ENCODE measurements at regions of chr1 and their contacts with region 1.

Region 1: GRCh38 chr1:184504040-184504954 is 117.5 kb downstream of the C1orf21 start:
- DNase-seq: no peak
- ATAC-seq: peak in 5 of 8 donors; percentile 40 to 80 (median 61)
- H3K4me3 ChIP-seq: peak overlapping the region in 7 of 10 donors; percentile 9 to 26 (median 11)
- H3K27ac ChIP-seq: peak overlapping the region; percentile 12 to 86 (median 50)
- H3K4me1 ChIP-seq: peaks cover 12 to 91% (median 68%) of the 10 kb centered on the region in 9 donors
- H3K27me3 ChIP-seq: no peaks in the 10 kb centered on the region
- CTCF ChIP-seq: no peak

Region 2: GRCh38 chr1:184545595-184545994 is 41.3 kb after region 1 on chr1:
- intact Hi-C with region 1: loop called in 1 of 10 experiments (anchors 5 kb)
- DNase-seq: no peak
- ATAC-seq: peak in 1 of 8 donors; percentile 48
- H3K4me3 ChIP-seq: no peak overlapping the region
- H3K27ac ChIP-seq: no peak overlapping the region
- H3K4me1 ChIP-seq: peaks cover 0 to 23% (median 12%) of the 10 kb centered on the region in 9 donors
- H3K27me3 ChIP-seq: no peaks in the 10 kb centered on the region
- CTCF ChIP-seq: no peak

Measured in heart right ventricle (tissue), 16 donors.